Activated T-helper 2 cell treated with anti-CD3 and anti-CD28 coated beads, Interferon-gamma antibody, Interleukin-2, Interleukin-4, amounts not matched to agents 10 μg/mL and 5 μg/mL and 100 μg/mL, durations not matched to agents 14 hours and 24 hours and 36 hours (primary cell): ENCODE measurements at regions of chr19 and their contacts with region 1.

Region 1: GRCh38 chr19:45178262-45179071 is at the start of gene BLOC1S3:
- DNase-seq: peak; percentile 100
- H3K4me3 Mint-ChIP-seq: peak within 1 kb of the TSS; percentile 86
- H3K27ac Mint-ChIP-seq: peak within 1 kb of the TSS; percentile 90
- H3K4me1 Mint-ChIP-seq: peaks cover 17% of the 10 kb centered on the region
- H3K27me3 Mint-ChIP-seq: no peaks in the 10 kb centered on the region
- total RNA-seq, gene BLOC1S3: 9.7 and 10.8 TPM in 2 replicates

Region 2: GRCh38 chr19:44746946-44747738 is 431.3 kb before region 1 on chr19:
- intact Hi-C with region 1: loop called (anchors 2 kb)
- DNase-seq: peak; percentile 83
- H3K4me3 Mint-ChIP-seq: peak overlapping the region; percentile 92
- H3K27ac Mint-ChIP-seq: peak overlapping the region; percentile 97
- H3K4me1 Mint-ChIP-seq: peaks cover 46% of the 10 kb centered on the region
- H3K27me3 Mint-ChIP-seq: peaks cover 3% of the 10 kb centered on the region

Region 3: GRCh38 chr19:45001087-45001739 is 177.3 kb before region 1 on chr19 and contains the start of gene RELB:
- intact Hi-C with region 1: loop called (anchors 10 kb)
- DNase-seq: peak; percentile 92
- H3K4me3 Mint-ChIP-seq: peak within 1 kb of the TSS; percentile 97
- H3K27ac Mint-ChIP-seq: peak within 1 kb of the TSS; percentile 100
- H3K4me1 Mint-ChIP-seq: peaks cover 12% of the 10 kb centered on the region
- H3K27me3 Mint-ChIP-seq: no peaks in the 10 kb centered on the region
- total RNA-seq, gene RELB: 62.7 and 70.3 TPM in 2 replicates

Region 4: DNA sequence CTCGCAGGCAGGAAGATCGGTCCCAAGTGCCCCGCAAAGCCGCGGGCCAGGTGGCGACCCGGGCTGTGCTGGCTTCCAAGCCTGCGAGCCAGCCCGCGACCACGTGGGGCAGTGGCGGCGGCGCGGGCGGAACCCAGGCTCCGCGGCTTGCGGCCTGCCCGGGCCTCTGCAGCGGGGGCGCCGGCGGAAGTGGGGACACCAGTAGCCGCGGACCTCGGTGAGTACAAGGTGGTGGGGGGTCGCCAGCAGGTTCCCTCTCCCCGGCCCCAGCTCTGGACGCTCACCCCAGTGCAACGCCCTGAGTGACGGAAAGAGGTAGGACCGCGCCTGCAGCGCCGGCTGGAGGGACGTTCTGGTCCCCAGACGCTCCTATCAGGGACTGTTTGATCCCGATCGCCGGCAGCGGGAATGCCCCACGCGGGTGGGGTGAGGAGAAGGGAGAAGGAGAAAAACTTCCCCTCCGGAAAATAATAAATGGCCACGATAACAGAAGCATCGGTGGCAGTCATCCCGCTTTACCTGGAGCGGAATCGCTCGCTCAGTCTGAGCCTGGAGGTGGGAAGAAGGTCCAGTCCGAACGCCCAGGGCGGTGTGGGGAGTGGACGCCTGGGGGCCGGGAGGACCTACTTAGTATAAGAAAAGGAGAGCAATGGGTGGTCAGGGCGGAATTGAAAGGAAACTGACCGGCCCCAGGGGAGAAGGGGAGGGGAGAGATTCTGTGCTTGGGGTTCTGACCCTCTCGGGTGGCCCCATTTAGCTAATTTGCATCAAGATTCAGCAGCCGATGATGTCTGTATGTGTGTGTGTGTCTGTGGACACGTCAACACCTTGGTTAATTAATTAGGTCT is 99.2 kb before region 1 on chr19 and contains the start of gene GEMIN7:
- intact Hi-C with region 1: loop called (anchors 5 kb)
- DNase-seq: peak; percentile 75
- H3K4me3 Mint-ChIP-seq: peak within 1 kb of the TSS; percentile 99
- H3K27ac Mint-ChIP-seq: peak within 1 kb of the TSS; percentile 89
- H3K4me1 Mint-ChIP-seq: peaks cover 33% of the 10 kb centered on the region
- H3K27me3 Mint-ChIP-seq: no peaks in the 10 kb centered on the region
- total RNA-seq, gene GEMIN7: 44.9 and 49.4 TPM in 2 replicates

Region 5: GRCh38 chr19:45125926-45126493 is 52.5 kb before region 1 on chr19:
- intact Hi-C with region 1: no loop called
- DNase-seq: peak; percentile 58
- H3K4me3 Mint-ChIP-seq: no peak overlapping the region
- H3K27ac Mint-ChIP-seq: no peak overlapping the region
- H3K4me1 Mint-ChIP-seq: peaks cover 8% of the 10 kb centered on the region
- H3K27me3 Mint-ChIP-seq: no peaks in the 10 kb centered on the region

Region 6: GRCh38 chr19:45152504-45153338 is 25.7 kb before region 1 on chr19:
- intact Hi-C with region 1: no loop called
- DNase-seq: peak; percentile 48
- H3K4me3 Mint-ChIP-seq: peak overlapping the region; percentile 42
- H3K27ac Mint-ChIP-seq: no peak overlapping the region
- H3K4me1 Mint-ChIP-seq: peaks cover 18% of the 10 kb centered on the region
- H3K27me3 Mint-ChIP-seq: peaks cover 20% of the 10 kb centered on the region

Region 7: DNA sequence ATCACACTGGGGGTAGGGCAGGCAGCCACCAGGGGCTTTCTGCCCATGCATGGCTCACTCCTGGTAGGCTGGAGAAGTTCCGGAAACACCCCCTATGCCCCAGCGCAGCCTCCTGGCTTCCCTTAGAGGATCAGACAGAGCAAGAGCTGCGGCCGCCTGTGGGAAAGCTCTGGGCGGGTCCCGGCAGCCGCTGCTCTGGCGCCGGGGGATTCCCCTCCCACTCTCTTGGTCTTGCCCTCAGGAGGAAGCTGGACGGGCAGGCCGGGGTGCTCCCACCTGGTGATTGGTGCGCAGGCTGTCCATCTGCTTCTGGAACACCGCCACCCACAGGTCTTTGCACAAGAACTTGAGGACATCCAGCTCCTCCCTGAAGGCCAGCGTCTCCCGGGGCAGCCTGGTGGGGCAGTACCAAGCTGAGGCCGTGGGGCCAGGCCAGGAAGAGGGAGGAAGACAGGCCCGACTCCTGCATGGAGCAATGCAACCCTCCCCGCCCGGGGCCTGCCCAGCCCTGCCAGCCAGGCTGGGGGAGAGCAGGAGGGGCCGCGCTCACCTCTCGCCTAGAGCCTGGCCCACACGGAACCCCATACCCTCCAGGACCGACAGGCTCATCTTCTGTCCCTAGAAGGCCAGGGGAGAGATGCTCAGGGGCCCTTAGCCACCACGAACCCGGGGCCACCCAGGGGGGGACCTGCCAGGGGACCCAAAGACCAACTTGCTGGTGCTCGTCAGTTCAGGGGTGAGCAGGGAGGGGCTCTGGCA is 13.7 kb before region 1 on chr19:
- intact Hi-C with region 1: loop called (anchors 1 kb)
- DNase-seq: peak; percentile 47
- H3K4me3 Mint-ChIP-seq: peak overlapping the region; percentile 2
- H3K27ac Mint-ChIP-seq: no peak overlapping the region
- H3K4me1 Mint-ChIP-seq: peaks cover 12% of the 10 kb centered on the region
- H3K27me3 Mint-ChIP-seq: no peaks in the 10 kb centered on the region

Region 8: DNA sequence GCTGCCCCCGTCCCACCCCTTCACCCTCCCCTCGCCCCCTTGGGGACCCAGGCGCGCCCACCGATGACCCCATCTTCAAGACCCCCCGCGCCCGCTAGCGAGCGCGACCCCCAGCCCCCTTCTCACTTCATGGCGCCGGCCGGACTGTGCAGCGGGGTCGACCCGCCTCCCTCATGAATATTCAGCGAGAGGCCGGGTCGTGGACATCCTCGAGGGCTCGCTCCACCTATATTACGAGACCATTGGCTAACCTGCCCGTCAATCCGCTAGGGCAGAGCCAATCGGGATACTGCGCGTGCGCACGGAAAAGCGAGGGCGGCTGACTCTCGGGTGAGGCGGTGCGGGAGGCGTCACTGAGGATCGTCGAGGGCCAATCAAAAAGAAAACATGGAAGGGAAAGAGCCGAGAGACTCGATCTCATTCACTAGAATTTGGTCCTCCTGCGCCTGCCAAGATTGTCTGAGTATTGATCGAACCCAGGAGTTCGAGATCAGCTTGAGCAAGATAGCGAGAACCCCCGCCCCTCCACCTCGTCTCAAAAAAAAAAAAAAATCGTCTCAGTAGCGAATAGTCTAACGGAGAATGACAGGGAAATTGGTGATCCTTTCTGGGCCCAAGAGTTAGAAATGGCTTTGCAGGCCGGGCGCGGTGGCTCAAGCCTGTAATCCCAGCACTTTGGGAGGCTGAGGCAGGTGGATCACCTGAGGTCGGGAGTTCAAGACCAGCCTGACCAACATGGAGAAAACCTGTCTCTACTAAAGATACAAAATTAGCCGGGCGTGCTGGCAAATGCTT is 192.1 kb after region 1 on chr19 and contains the start of gene ERCC2:
- intact Hi-C with region 1: no loop called
- DNase-seq: peak; percentile 100
- H3K4me3 Mint-ChIP-seq: peak within 1 kb of the TSS; percentile 87
- H3K27ac Mint-ChIP-seq: peak within 1 kb of the TSS; percentile 99
- H3K4me1 Mint-ChIP-seq: peaks cover 14% of the 10 kb centered on the region
- H3K27me3 Mint-ChIP-seq: no peaks in the 10 kb centered on the region
- total RNA-seq, gene ERCC2: 32.6 and 34.5 TPM in 2 replicates

Region 9: GRCh38 chr19:45834970-45835369 is 656.5 kb after region 1 on chr19:
- intact Hi-C with region 1: no loop called
- DNase-seq: no peak
- H3K4me3 Mint-ChIP-seq: no peak overlapping the region
- H3K27ac Mint-ChIP-seq: no peak overlapping the region
- H3K4me1 Mint-ChIP-seq: no peaks in the 10 kb centered on the region
- H3K27me3 Mint-ChIP-seq: no peaks in the 10 kb centered on the region